ENCODE measurements at regions of chr2 and their contacts with region 1.

Region 1: GRCh38 chr2:168961450-168962229 is 60.5 kb downstream of the G6PC2 start:
- DNase-seq: peak; percentile 92
- ATAC-seq: peak; percentile 82
- H3K4me3 ChIP-seq: no peak overlapping the region
- H3K27ac ChIP-seq: peak overlapping the region; percentile 16; the same call in 1 of the 2 replicates
- H3K4me1 ChIP-seq: peaks cover 32% of the 10 kb centered on the region
- H3K27me3 ChIP-seq: no peaks in the 10 kb centered on the region
- CTCF ChIP-seq: peak; percentile 88

Region 2: DNA sequence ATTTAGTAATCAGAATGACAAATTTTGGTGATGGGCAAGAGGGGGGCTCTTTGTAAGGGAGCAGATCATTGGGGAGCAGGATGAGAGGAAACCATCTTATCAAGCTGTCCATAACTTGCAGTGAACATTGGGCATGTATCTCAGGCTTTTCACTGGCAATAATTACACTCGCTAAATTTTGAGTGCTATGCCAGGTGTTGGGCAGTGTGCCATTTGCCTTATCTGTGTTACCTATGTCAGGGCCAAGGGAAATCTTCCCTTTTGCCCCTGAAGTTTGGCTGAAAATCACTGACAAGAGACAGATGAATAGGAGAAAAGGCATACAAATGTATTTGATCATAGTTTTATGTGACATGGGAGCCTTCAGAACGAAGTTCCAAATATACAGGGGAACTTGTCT is 120.2 kb before region 1 on chr2:
- CTCF ChIA-PET with region 1: no interaction called
- POLR2A ChIA-PET with region 1: no interaction called
- intact Hi-C with region 1: no loop called
- DNase-seq: no peak
- ATAC-seq: no peak
- H3K4me3 ChIP-seq: no peak overlapping the region
- H3K27ac ChIP-seq: no peak overlapping the region
- H3K4me1 ChIP-seq: no peaks in the 10 kb centered on the region
- H3K27me3 ChIP-seq: no peaks in the 10 kb centered on the region
- CTCF ChIP-seq: no peak

Region 3: DNA sequence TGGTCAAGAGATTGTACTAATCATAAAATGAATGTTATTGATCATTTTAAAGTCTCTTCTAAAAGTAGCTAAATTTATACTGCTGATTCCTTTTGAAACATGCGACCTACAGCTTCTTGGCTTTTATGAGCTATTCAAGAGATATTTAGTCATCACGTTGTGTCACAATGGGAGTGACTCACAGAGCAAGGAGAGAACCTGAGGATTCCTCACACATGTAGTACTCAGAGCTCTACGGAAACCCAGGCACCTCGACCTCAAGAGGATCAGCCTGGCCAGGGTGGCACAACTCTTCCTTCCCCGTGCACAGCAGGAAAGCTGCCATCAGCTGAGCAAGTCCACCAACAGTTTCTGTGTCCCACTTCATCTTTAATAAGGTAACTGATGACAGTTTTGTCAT is 107.7 kb after region 1 on chr2 and contains the start of gene DHRS9:
- CTCF ChIA-PET with region 1: no interaction called
- POLR2A ChIA-PET with region 1: no interaction called
- intact Hi-C with region 1: loop called (anchors 10 kb)
- DNase-seq: peak; percentile 97
- ATAC-seq: peak; percentile 97
- H3K4me3 ChIP-seq: no peak within 1 kb of the TSS
- H3K27ac ChIP-seq: peak within 1 kb of the TSS; percentile 65
- H3K4me1 ChIP-seq: peaks cover 44% of the 10 kb centered on the region
- H3K27me3 ChIP-seq: no peaks in the 10 kb centered on the region
- CTCF ChIP-seq: no peak
- total RNA-seq, gene DHRS9: 0.22 TPM in 1 of 2 replicates, not detected in the other

Region 4: DNA sequence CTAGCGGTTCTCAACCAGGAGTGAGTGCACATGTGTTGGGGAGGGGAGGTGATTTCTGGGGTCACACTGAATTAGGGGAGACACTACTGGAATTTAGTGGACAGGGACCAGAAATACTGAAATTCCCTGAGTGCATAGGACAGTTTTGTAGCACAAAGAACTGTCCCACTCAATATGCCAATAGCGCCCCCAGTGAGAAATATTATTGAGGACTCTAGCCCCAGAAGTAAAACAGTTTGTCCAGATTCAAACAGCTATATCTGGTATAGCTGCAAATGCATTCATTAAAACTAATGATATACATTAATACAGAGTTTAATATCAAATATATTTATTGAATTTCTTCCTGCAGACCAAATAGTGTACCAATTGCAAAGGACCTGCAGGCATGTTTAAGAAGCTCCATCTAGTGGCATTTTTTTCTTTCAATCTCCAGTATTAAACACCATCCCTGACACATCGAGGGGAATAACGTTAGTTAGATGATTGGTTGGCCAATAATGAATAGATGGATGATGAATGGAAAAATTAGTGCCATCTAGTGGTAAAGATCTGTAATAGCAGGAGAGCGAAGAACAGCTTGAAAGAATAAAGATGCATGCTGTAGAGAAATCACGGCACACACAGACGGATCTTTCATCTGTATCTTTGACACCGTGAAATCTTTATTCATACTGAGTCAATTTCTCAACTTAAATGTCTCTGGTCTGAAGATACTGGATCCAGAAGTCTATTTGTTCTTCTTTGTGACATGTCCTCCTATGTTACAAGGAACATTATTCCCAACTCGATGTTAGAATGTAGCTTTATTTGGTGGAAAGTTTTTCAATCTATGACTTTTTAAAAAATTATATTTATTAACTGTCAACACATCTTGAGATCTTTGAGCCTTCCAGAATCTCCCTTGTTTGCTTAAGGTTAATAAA is 170.2 kb after region 1 on chr2:
- CTCF ChIA-PET with region 1: interaction called, 3 read pairs
- POLR2A ChIA-PET with region 1: no interaction called
- intact Hi-C with region 1: loop called (anchors 1 kb)
- DNase-seq: peak; percentile 81
- ATAC-seq: peak; percentile 70
- H3K4me3 ChIP-seq: no peak overlapping the region
- H3K27ac ChIP-seq: no peak overlapping the region
- H3K4me1 ChIP-seq: 0 out of 2 replicates have a peak, but pooled peaks cover 8% of the 10 kb centered on the region
- H3K27me3 ChIP-seq: no peaks in the 10 kb centered on the region
- CTCF ChIP-seq: peak; percentile 87

Region 5: DNA sequence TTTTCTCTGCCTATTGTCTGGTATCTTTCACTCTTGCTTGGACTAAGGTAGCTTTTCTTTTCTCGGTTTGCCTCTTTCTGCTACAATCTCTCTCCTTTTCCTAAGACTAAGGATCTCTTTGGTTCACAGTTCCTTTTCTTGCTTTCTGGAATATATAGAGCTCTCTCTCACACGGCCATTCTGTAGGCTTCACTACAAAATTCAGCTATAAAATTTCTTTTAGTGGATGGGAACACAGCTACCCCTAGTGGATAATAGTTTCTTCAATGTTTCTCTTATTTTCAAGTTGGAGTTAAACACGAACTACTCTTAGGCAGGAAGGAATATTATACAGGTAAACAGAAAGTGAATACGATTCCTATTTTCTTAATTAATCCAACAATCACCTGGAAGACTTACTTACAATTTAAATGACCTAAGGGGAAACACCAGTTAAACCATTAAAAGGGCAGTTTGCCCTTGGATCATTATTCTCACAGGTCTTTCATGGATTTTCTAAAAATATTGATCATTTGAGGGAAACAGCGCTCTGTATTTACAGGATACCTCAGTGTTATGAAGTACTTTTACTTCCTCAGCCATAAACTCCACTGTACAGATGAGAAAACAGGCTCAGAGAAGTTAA is 260.2 kb after region 1 on chr2:
- CTCF ChIA-PET with region 1: no interaction called
- POLR2A ChIA-PET with region 1: no interaction called
- intact Hi-C with region 1: loop called (anchors 5 kb)
- DNase-seq: peak; percentile 73
- ATAC-seq: peak; percentile 82
- H3K4me3 ChIP-seq: 0 out of 2 replicates have a peak overlapping the region, but pooled peaks have one; percentile 29
- H3K27ac ChIP-seq: no peak overlapping the region
- H3K4me1 ChIP-seq: 0 out of 2 replicates have a peak, but pooled peaks cover 3% of the 10 kb centered on the region
- H3K27me3 ChIP-seq: peaks cover 15% of the 10 kb centered on the region
- CTCF ChIP-seq: peak; percentile 79